ENCODE measurements at regions of chr4 and their contacts with region 1.

Region 1: GRCh38 chr4:87375719-87376291 is 15.2 kb downstream of the HSD17B11 start:
- DNase-seq: no peak
- H3K4me3 Mint-ChIP-seq: no peak overlapping the region
- H3K27ac Mint-ChIP-seq: no peak overlapping the region
- H3K4me1 Mint-ChIP-seq: no peaks in the 10 kb centered on the region
- H3K27me3 Mint-ChIP-seq: no peaks in the 10 kb centered on the region

Region 2: DNA sequence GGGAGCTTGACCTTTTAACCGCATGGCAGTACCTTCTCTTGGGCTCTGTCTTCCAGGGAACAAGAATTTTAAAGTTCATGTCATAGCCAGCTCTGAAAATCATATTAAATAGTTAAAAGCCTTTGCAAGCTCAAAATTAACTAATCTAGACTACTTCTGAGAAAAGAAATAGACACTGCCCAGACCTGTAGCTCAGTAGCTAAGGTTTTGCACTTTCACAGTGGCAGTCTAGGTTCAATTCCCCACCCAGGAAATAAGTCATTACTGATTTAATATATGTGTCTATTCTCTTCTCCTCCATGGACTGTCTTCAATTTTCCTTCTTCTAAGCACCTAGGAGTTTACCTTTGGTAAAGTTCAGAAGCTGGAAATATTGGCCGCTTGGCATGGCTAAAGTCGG is 12.2 kb before region 1 on chr4:
- CTCF ChIA-PET with region 1: interaction called, 12 read pairs
- POLR2A ChIA-PET with region 1: no interaction called
- DNase-seq: no peak
- H3K4me3 Mint-ChIP-seq: no peak overlapping the region
- H3K27ac Mint-ChIP-seq: no peak overlapping the region
- H3K4me1 Mint-ChIP-seq: no peaks in the 10 kb centered on the region
- H3K27me3 Mint-ChIP-seq: no peaks in the 10 kb centered on the region

Region 3: DNA sequence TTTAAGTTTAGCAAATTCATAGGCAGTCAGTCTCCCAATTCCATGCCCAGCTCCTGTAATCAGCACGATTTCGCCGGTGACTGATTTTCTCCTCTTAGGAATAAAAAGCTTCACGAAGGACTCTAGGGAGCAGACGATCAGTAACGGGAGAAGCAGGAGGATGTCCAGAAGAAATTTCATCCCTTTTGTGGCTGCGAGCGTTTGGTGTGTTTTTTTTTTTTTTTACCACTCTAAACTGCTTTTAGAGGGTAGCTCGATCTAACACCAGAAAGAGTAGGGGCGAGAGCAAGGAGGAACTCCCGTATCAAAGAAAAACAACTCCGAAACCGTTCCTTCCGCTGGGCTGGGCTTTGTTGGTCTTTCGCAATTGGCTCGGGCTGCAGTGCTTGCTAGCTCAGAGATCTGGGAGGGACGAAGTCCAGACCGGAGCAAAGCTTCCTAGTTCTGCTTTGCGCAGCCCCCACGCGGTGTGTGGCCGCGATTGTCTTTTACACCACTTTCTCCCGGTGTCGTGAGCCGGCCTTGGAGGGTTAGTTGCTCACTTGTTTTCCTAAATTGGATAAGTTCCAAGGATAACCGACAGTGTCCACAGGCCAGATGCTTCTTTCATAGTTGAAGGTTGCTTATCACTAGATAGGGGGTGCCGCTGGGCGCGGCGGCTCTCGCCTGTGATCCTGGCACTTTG is 15.2 kb after region 1 on chr4 and contains the start of gene HSD17B11:
- CTCF ChIA-PET with region 1: interaction called, 29 read pairs
- POLR2A ChIA-PET with region 1: interaction called, 11 read pairs
- DNase-seq: peak; percentile 85
- H3K4me3 Mint-ChIP-seq: peak within 1 kb of the TSS; percentile 95
- H3K27ac Mint-ChIP-seq: peak within 1 kb of the TSS; percentile 77
- H3K4me1 Mint-ChIP-seq: peaks cover 37% of the 10 kb centered on the region
- H3K27me3 Mint-ChIP-seq: peaks cover 1% of the 10 kb centered on the region
- total RNA-seq, gene HSD17B11: 39.5 to 44.3 TPM

Region 4: DNA sequence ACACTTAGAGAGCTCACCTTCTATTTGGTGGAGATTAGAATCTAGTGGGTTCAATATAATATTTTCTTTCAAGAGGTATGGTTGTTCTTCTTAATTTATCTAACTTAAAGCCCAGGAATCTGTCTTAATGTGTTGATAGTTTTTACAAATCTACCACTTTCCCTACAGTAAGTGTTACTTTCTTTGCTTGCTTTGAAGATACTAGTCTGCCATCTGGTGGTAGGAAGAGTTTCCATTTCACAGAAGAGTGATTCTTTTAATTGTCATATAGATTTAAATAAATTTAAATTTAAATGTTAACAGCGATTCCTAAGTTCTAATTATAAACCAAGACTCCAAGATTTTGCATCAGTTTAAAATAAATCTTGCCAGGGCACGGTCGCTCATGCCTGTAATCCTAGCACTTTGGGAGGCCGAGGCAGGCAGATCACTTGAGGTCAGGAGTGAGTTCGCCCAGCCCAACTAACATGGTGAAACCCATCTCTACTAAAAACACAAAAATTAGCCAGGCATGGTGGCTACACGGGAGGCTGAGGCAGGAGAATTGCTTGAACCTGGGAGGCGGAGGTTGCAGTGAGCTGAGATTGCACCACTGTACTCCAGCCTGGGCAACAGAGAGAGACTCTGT is 90.0 kb after region 1 on chr4:
- CTCF ChIA-PET with region 1: interaction called, 83 read pairs
- POLR2A ChIA-PET with region 1: no interaction called
- DNase-seq: no peak
- H3K4me3 Mint-ChIP-seq: no peak overlapping the region
- H3K27ac Mint-ChIP-seq: no peak overlapping the region
- H3K4me1 Mint-ChIP-seq: peaks cover 6% of the 10 kb centered on the region
- H3K27me3 Mint-ChIP-seq: no peaks in the 10 kb centered on the region